IMR-90 (cell line): ENCODE measurements at regions of chr5 and their contacts with region 1.

Region 1: GRCh38 chr5:67437905-67438845 is 241.6 kb upstream of the CD180 start:
- DNase-seq: no peak
- ATAC-seq: no peak
- H3K4me3 ChIP-seq: no peak overlapping the region
- H3K27ac ChIP-seq: no peak overlapping the region
- H3K4me1 ChIP-seq: no peaks in the 10 kb centered on the region
- H3K27me3 ChIP-seq: no peaks in the 10 kb centered on the region
- CTCF ChIP-seq: no peak
- POLR2A ChIP-seq: no peak
- RAD21 ChIP-seq: no peak

Region 2: GRCh38 chr5:68190619-68191018 is 752.4 kb after region 1 on chr5:
- CTCF ChIA-PET with region 1: no interaction called
- POLR2A ChIA-PET with region 1: interaction called, 14 read pairs
- dilution Hi-C with region 1: no loop called
- in situ Hi-C with region 1: no loop called
- intact Hi-C with region 1: no loop called
- DNase-seq: no peak
- ATAC-seq: no peak
- H3K4me3 ChIP-seq: no peak overlapping the region
- H3K27ac ChIP-seq: no peak overlapping the region
- H3K4me1 ChIP-seq: 0 out of 2 replicates have a peak, but pooled peaks cover 2% of the 10 kb centered on the region
- H3K27me3 ChIP-seq: peaks cover 2% of the 10 kb centered on the region; the same call in 1 of the 2 replicates
- CTCF ChIP-seq: no peak
- POLR2A ChIP-seq: no peak
- RAD21 ChIP-seq: no peak